Dendritic cell treated with granulocyte-macrophage colony-stimulating factor and Interleukin-4, amounts not matched to agents 40 ng/mL and 50 ng/mL, for 4 days (primary cell): ENCODE measurements at regions of chr3 and their contacts with region 1.

Region 1: DNA sequence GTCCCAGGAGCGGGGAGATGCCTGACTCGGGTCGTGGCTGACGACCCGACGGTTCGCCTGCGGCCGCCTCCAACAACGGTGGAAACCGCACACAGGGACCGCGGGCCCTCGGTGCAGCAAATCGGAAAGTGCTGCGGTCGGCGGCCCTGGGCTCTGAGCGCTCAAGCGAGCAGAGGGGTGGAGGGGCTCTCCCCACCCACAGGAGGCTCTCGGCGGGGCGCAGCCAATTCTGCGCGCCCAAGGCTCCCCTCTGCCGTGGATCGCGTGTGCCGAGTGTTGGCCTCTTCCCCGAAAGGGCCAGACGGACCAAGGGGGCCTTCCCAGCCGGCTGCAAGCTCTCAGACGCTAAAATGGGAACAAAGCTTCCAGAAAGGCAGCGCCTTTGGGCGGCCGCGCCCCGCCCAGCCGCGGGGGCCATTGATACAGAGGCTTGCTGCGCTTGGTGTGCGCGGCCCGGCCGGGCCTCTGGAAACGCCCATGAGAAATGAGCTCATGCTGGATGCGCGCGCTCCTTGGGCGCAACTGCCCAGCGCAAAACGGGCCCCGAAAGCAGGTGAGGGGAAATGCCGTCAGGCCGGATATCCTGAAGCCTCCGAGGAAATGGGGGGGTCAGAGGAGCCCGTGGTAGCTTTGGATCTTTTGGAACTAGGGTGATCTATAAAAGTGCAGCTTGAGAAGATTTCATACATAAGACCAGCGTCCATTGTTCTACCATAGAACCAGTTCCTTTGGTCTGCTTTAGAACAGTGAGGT is 1.2 kb upstream of the GSK3B start:
- H3K4me3 Mint-ChIP-seq: no peak overlapping the region
- H3K27ac Mint-ChIP-seq: no peak overlapping the region
- H3K4me1 Mint-ChIP-seq: peaks cover 24% of the 10 kb centered on the region
- H3K27me3 Mint-ChIP-seq: no peaks in the 10 kb centered on the region

Region 2: GRCh38 chr3:119463171-119464169 is 631.9 kb before region 1 on chr3 and contains the start of gene TMEM39A:
- intact Hi-C with region 1: loop called (anchors 10 kb)
- H3K4me3 Mint-ChIP-seq: peak within 1 kb of the TSS; percentile 95
- H3K27ac Mint-ChIP-seq: peak within 1 kb of the TSS; percentile 96
- H3K4me1 Mint-ChIP-seq: peaks cover 44% of the 10 kb centered on the region
- H3K27me3 Mint-ChIP-seq: no peaks in the 10 kb centered on the region

Region 3: GRCh38 chr3:119702530-119703157 is 392.8 kb before region 1 on chr3 and contains the start of gene CFAP91:
- intact Hi-C with region 1: loop called (anchors 2 kb)
- H3K4me3 Mint-ChIP-seq: peak within 1 kb of the TSS; percentile 65
- H3K27ac Mint-ChIP-seq: peak within 1 kb of the TSS; percentile 43
- H3K4me1 Mint-ChIP-seq: peaks cover 33% of the 10 kb centered on the region
- H3K27me3 Mint-ChIP-seq: peaks cover 16% of the 10 kb centered on the region

Region 4: DNA sequence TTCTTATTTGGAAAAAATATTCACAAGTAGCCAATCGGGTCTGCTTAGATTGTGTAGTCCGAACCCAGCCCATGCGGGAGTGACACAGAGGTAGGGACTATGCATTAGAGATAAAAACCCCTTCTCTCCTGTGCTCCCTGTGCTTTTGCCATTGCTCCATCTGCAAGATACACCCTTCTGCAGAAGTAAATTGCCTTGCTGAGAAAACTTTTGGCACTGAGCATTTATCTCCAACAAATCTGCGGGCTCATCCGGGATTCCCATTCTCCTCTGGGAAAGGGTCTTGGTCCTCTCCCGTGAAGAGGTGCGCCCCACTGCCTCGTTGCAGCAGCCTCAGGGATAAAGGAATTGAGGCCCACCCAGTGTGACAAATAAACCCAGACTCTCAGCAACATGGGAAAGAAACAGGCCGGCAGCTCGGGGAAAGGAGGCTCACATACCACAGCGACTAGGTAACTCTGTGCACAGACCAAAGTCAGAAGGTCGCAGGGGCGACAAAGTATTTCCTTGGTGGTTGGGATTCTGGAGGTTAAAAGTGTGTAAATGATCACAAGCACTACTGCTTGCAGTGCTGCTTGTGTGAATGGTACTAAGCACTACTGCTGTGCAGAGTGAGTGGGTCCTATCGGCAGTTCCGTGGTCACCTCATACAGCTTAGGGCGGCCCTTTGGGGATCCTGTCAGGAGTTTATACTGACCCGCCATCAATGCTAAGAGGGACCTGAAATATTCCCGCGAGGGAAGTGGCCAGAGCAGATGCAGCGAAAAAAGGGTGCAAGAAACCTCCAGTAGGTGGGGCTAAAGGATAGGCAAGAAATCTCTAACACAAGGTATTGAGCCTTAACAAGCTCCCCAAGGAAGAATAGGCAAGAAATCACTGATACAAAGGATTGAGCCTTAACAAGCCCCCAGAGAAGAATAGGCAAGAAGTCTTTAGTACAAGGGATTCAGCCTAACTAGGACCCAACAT is 55.5 kb before region 1 on chr3:
- intact Hi-C with region 1: loop called (anchors 10 kb)
- H3K4me3 Mint-ChIP-seq: no peak overlapping the region
- H3K27ac Mint-ChIP-seq: no peak overlapping the region
- H3K4me1 Mint-ChIP-seq: peaks cover 7% of the 10 kb centered on the region
- H3K27me3 Mint-ChIP-seq: no peaks in the 10 kb centered on the region

Region 5: GRCh38 chr3:120417272-120417911 is 322.0 kb after region 1 on chr3:
- intact Hi-C with region 1: loop called (anchors 1 kb)
- H3K4me3 Mint-ChIP-seq: peak overlapping the region; percentile 65
- H3K27ac Mint-ChIP-seq: peak overlapping the region; percentile 69
- H3K4me1 Mint-ChIP-seq: peaks cover 31% of the 10 kb centered on the region
- H3K27me3 Mint-ChIP-seq: peaks cover 10% of the 10 kb centered on the region